GM10248 (cell line): ENCODE measurements at regions of chr3 and their contacts with region 1.

Region 1: DNA sequence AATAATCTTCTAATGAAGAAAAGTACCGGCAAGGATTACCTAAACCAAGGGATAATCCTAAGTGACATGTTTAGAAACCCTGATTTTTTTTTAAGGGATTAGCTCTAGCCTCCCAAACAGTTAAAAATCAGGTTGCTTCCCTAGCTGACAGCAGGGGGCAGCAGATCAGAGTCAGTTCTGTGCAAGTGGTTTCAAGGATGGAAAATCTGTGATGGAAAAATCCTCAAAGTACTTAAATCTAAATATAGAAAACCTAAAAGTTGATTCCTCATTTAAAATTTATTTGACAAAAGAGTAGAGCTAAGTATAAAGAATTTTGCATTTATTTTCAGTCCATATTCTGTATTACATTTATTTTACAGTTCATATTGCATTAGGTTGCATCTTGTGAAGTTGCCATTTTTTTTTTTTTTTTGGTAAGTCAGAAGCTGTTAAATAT is 107.6 kb downstream of the PEX5L start:
- DNase-seq: peak; percentile 37
- CTCF ChIP-seq: peak; percentile 75

Region 2: GRCh38 chr3:179811321-179812095 is 117.6 kb before region 1 on chr3:
- CTCF ChIA-PET with region 1: interaction called, 15 read pairs
- POLR2A ChIA-PET with region 1: no interaction called
- DNase-seq: peak; percentile 64
- CTCF ChIP-seq: peak; percentile 64

Region 3: DNA sequence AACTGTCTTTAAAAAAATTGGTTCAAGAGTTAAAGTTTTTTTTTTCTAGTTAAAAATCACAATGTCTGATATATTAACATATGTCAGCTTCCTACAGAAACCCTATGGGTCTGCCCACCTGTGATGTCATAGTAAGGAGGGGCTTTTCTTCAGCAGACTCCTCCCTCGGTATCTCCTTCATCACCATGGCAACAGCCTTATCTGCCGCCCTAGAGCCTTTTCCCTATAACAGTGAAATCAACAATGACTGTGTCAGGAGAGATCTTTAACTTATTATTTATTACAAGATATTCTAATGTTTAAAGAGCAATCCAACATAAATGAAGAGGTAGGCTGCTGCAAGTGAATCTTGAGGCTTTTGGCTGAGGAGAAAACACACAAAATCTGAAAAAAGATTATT is 31.1 kb before region 1 on chr3:
- CTCF ChIA-PET with region 1: interaction called, 18 read pairs
- POLR2A ChIA-PET with region 1: no interaction called
- DNase-seq: peak; percentile 19
- CTCF ChIP-seq: no peak

Region 4: DNA sequence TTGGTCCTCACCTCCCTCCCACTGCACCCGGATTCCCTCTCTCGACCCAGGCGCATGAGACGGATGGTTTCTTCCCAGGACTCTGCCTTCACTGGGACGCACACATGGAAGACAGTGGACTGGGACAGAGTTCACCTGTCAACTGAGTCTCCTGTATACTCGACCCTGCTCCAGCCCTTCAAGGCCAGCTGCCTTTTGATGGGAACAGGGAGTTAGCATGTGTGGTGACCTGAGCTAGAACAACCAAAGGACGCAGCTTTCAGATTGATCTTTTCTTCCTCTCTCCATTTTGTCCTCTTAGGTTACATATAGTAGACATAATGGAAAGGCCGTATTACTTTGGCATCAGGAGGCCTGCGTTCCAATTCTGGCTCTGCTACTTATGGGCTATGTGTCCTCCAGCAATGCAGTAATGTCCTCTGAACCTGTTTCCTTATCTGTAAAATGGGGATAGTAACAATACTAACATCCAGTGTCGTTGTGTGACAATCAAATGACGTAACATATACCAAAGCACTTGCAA is 13.5 kb after region 1 on chr3:
- CTCF ChIA-PET with region 1: interaction called, 23 read pairs
- POLR2A ChIA-PET with region 1: no interaction called
- DNase-seq: no peak
- CTCF ChIP-seq: no peak

Region 5: GRCh38 chr3:179954226-179954870 is 25.2 kb after region 1 on chr3:
- CTCF ChIA-PET with region 1: interaction called, 13 read pairs
- POLR2A ChIA-PET with region 1: no interaction called
- DNase-seq: no peak
- CTCF ChIP-seq: no peak

Region 6: GRCh38 chr3:180390313-180390712 is 461.2 kb after region 1 on chr3:
- CTCF ChIA-PET with region 1: no interaction called
- POLR2A ChIA-PET with region 1: no interaction called
- DNase-seq: no peak
- CTCF ChIP-seq: no peak

Region 7: GRCh38 chr3:180594631-180595558 is 665.8 kb after region 1 on chr3:
- CTCF ChIA-PET with region 1: interaction called, 14 read pairs
- POLR2A ChIA-PET with region 1: no interaction called
- DNase-seq: peak; percentile 20
- CTCF ChIP-seq: peak; percentile 48